ENCODE measurements at regions of chr9 and their contacts with region 1.

Region 1: DNA sequence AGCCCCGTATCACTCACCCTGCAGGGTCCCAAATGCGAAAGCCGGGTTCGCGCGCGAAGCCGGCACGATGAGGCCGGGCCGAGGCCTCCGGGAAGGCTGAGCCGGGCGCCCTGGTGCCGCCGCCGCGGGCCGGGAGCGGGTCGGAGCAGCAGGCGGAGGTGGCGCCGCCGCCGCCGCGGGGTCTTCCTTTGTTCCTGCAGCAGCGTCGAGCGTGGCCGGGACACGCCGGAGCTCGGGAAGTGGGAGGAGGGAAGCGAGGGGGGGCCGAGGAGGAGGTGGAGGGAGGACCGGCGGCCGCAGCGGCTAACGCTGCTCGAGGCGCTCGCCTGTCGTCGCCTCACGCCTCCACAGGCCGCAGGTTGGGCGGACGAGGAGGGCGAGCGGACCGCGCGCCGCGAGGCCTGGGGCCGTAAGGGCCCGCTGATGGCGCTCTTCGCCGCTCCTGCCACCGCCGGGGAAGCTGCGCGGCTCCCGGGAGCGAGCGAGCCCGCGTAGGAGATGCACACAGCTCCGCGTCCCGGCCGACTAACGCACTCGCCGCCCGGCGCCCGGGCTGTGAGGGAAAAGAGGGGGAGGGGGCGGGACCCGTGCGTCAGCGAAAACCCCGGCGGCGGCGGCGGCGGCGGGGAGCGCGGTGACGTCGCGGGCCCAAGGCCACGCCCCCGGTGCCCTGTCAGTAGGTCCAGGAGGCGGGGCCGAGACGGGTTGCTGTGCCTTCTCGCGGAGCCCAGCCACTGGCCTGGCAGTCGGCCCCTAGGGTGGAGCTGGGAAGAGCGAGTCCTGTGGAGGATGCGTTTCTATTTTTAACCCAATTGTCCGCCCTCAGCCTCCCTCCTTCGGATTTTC is at the start of gene ZFAND5:
- DNase-seq: peak; percentile 99
- ATAC-seq: peak; percentile 94
- H3K4me3 ChIP-seq: peak within 1 kb of the TSS; percentile 89 to 95
- H3K27ac ChIP-seq: peak within 1 kb of the TSS; percentile 96 to 98
- H3K4me1 ChIP-seq: peaks cover 0 to 1% of the 10 kb centered on the region in 2 donors
- H3K27me3 ChIP-seq: no peaks in the 10 kb centered on the region
- total RNA-seq, gene ZFAND5: 138 to 205 TPM

Region 2: DNA sequence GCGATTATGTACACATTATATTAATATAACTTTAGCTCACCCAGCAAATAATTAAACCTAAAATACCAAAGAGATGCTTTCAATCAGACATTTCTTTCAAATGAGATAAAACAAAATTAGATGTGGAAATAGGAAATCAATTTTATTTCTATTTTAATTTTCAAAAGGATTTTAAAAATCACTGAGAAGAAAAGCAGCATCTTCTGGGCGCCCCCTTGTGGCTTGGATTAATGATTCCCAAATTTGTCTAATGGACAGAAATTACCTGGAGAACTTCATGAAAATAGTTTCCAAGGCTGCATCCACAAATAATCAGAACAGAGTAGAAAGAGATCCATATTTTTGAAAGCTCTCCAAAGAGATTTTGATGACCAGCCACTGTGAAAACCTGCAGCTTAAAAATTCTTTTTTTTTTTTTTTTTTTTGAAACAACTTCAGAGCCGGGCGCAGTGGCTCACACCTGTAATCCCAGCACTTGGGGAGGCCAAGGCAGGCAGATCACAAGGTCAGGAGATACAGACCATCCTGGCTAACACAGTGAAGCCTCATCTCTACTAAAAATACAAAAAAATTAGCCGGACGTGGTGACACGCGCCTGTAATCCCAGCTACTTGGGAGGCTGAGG is 545.7 kb before region 1 on chr9:
- intact Hi-C with region 1: no loop called
- DNase-seq: no peak
- ATAC-seq: no peak
- H3K4me3 ChIP-seq: no peak overlapping the region
- H3K27ac ChIP-seq: no peak overlapping the region
- H3K4me1 ChIP-seq: peaks cover 0 to 4% of the 10 kb centered on the region in 2 donors
- H3K27me3 ChIP-seq: no peaks in the 10 kb centered on the region

Region 3: GRCh38 chr9:72579880-72580570 is 215.1 kb after region 1 on chr9:
- intact Hi-C with region 1: loop called in 1 of 2 experiments (anchors 5 kb)
- DNase-seq: no peak
- ATAC-seq: no peak
- H3K4me3 ChIP-seq: no peak overlapping the region
- H3K27ac ChIP-seq: no peak overlapping the region
- H3K4me1 ChIP-seq: peaks cover 0 to 5% of the 10 kb centered on the region in 2 donors
- H3K27me3 ChIP-seq: no peaks in the 10 kb centered on the region